ENCODE measurements at regions of chr19 and their contacts with region 1.

Region 1: DNA sequence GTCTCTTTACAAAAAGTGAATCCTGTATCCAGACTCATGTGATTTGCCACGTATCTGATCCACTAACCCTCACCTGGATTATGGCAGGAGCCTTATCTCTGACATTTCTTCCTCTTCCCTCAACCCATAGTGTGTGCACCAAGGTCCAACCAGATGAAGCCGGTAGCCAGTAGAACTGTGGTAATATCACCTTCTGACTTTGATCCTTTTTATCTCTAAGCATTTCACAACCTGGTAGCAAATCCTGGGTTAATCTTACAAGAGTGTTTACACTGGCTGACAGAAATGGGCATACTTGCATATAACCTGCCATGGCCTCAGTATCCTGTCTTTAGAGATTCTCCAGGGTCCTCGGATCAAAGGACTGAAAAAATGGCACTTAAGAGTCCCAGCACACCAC is 1.9 kb downstream of the ZNF417 start:
- DNase-seq: no peak
- H3K4me3 Mint-ChIP-seq: no peak overlapping the region
- H3K27ac Mint-ChIP-seq: no peak overlapping the region
- H3K4me1 Mint-ChIP-seq: peaks cover 22% of the 10 kb centered on the region
- H3K27me3 Mint-ChIP-seq: no peaks in the 10 kb centered on the region

Region 2: GRCh38 chr19:57559404-57560025 is 355.0 kb before region 1 on chr19 and contains the start of gene ZNF550:
- CTCF ChIA-PET with region 1: no interaction called
- intact Hi-C with region 1: loop called (anchors 5 kb)
- DNase-seq: peak; percentile 86
- H3K4me3 Mint-ChIP-seq: peak within 1 kb of the TSS; percentile 96
- H3K27ac Mint-ChIP-seq: peak within 1 kb of the TSS; percentile 84
- H3K4me1 Mint-ChIP-seq: peaks cover 25% of the 10 kb centered on the region
- H3K27me3 Mint-ChIP-seq: no peaks in the 10 kb centered on the region
- total RNA-seq, gene ZNF550: 6.6 to 9.3 TPM

Region 3: GRCh38 chr19:57746580-57747471 is 167.7 kb before region 1 on chr19 and contains the start of gene ZNF776:
- CTCF ChIA-PET with region 1: no interaction called
- intact Hi-C with region 1: loop called (anchors 1 kb)
- DNase-seq: peak; percentile 90
- H3K4me3 Mint-ChIP-seq: peak within 1 kb of the TSS; percentile 99
- H3K27ac Mint-ChIP-seq: peak within 1 kb of the TSS; percentile 90
- H3K4me1 Mint-ChIP-seq: peaks cover 17% of the 10 kb centered on the region
- H3K27me3 Mint-ChIP-seq: no peaks in the 10 kb centered on the region
- total RNA-seq, gene ZNF776: 9.4 to 10.3 TPM

Region 4: GRCh38 chr19:57850553-57851017 is 63.9 kb before region 1 on chr19:
- CTCF ChIA-PET with region 1: no interaction called
- intact Hi-C with region 1: loop called (anchors 2 kb)
- DNase-seq: no peak
- H3K4me3 Mint-ChIP-seq: peak overlapping the region; percentile 84
- H3K27ac Mint-ChIP-seq: peak overlapping the region; percentile 77
- H3K4me1 Mint-ChIP-seq: peaks cover 21% of the 10 kb centered on the region
- H3K27me3 Mint-ChIP-seq: no peaks in the 10 kb centered on the region

Region 5: GRCh38 chr19:57947208-57948134 is 32.9 kb after region 1 on chr19 and contains the start of gene ZNF256:
- CTCF ChIA-PET with region 1: no interaction called
- intact Hi-C with region 1: loop called (anchors 1 kb)
- DNase-seq: peak; percentile 93
- H3K4me3 Mint-ChIP-seq: peak within 1 kb of the TSS; percentile 91
- H3K27ac Mint-ChIP-seq: peak within 1 kb of the TSS; percentile 87
- H3K4me1 Mint-ChIP-seq: peaks cover 17% of the 10 kb centered on the region
- H3K27me3 Mint-ChIP-seq: no peaks in the 10 kb centered on the region
- total RNA-seq, gene ZNF256: 4.4 to 4.7 TPM

Region 6: DNA sequence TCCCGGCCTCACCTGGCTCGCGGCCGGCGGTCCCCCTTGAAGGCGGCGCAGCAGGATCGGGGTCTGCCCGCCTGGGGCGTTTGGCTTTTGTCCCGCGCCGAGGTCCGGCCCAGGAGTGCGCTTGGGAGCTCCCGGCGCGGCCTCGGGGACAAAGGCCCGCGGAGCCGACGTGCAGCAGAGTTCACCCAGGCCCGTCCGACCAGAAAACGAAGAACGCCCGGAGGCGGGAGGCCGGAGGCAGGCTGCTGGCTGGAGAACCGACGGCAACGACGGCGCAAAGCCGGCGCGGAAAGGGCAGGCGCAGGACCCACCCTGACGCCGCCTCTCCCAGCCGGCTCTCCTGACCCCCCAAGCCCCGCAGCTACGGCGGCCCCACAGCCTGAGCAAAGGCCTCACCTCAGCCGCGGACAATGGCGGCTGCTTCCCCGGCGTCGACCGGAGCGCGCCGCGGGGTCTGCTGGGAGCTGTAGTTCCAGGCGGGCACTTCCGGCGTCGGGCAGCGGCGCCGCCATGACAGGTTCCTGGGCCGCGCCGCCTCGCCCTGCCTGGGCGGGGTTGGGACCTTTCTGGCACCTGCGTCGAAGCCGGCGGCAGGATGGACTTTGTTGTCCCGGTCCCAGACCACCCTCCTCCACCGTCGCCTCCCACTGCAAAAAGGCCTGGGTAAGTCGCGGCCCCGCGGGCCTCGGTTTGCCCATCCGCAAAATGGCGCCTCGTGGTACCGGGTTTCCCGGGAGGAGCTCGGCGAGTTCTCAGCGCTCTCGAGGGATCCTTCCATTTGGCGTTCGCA is 88.0 kb after region 1 on chr19 and contains the start of gene ZNF606:
- CTCF ChIA-PET with region 1: no interaction called
- intact Hi-C with region 1: no loop called
- DNase-seq: peak; percentile 86
- H3K4me3 Mint-ChIP-seq: peak within 1 kb of the TSS; percentile 81
- H3K27ac Mint-ChIP-seq: peak within 1 kb of the TSS; percentile 79
- H3K4me1 Mint-ChIP-seq: peaks cover 29% of the 10 kb centered on the region
- H3K27me3 Mint-ChIP-seq: no peaks in the 10 kb centered on the region
- total RNA-seq, gene ZNF606: 4.5 to 4.7 TPM

Measured in activated naive CD4-positive, alpha-beta T cell treated with anti-CD3 and anti-CD28 coated beads for 36 hours (primary cell).